K562 (cell line): ENCODE measurements at regions of chr12 and their contacts with region 1.

Region 1: GRCh38 chr12:6335451-6336078 is 6.3 kb downstream of the TNFRSF1A start:
- DNase-seq: peak; percentile 54 to 85 (median 65)
- ATAC-seq: peak; percentile 79
- H3K4me3 ChIP-seq: peak overlapping the region; percentile 39; the same call in 1 of the 2 replicates
- H3K27ac ChIP-seq: peak overlapping the region; percentile 98
- H3K4me1 ChIP-seq: peaks cover 27 to 48% of the 10 kb centered on the region in 2 experiments
- H3K27me3 ChIP-seq: no peaks in the 10 kb centered on the region
- CTCF ChIP-seq: peak; percentile 70 to 86 (median 74)
- EP300 ChIP-seq: no peak
- POLR2A ChIP-seq: no peak
- RAD21 ChIP-seq: peak; percentile 65 to 83

Region 2: DNA sequence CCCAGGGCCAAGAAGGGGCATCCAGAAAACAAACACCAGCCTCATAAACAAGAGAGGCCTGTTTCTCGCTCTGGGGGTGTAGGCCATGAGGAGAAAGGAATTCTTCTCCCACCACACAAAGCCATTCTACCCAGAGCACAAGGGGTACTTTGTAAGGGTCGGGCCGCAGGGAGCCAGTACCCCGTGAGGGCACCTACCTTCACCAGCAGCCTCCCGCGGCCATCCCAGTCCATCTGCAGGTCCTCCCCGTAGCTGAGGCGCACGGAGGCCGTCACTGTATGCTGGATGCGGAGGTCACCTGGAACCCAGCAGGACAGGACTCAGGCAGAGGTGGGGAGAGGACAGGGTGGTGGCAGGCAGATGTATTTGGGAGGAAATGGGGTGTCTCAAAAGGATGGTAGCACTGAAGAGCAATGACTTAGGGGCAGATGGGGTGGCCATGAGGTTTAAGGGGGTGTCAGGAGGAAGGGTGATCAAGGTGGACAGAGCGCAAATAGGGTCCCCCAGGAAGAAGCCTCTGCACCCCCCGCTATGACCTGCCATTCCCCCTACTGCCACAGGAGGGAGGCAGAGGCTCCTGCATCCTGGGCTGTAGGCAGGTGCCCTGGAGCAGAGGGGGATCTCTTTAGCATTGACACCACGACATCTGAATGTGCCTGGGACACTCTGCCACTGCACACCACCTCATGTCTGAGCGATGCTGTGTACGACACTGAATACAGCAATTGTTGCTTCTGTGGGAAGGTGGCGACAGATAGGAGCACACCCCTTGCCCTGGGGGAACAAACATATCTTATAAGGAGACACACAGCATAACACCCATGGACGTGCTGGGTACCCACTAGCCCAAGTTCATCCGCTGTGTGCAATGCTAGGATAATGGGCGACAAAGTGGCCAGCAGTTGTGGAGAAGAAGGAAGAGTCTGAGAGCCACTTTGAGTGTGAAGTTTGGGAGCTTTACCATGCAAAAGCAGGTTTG is 272.5 kb before region 1 on chr12:
- CTCF ChIA-PET with region 1: no interaction called
- POLR2A ChIA-PET with region 1: no interaction called
- in situ Hi-C with region 1: no loop called
- intact Hi-C with region 1: no loop called
- DNase-seq: peak; percentile 43 to 71 (median 71)
- ATAC-seq: peak; percentile 93
- H3K4me3 ChIP-seq: no peak overlapping the region
- H3K27ac ChIP-seq: no peak overlapping the region
- H3K4me1 ChIP-seq: no peaks in the 10 kb centered on the region
- H3K27me3 ChIP-seq: peaks cover 4 to 30% of the 10 kb centered on the region in 2 experiments; a peak in 3 of 5 replicates
- CTCF ChIP-seq: peak; percentile 79 to 85 (median 82)
- EP300 ChIP-seq: no peak
- POLR2A ChIP-seq: no peak
- RAD21 ChIP-seq: peak; percentile 69 to 88

Region 3: GRCh38 chr12:6323340-6323994 is 12.1 kb before region 1 on chr12:
- CTCF ChIA-PET with region 1: no interaction called
- POLR2A ChIA-PET with region 1: interaction called, 38 read pairs
- in situ Hi-C with region 1: no loop called
- intact Hi-C with region 1: no loop called
- DNase-seq: peak; percentile 63 to 77 (median 70)
- ATAC-seq: peak; percentile 84
- H3K4me3 ChIP-seq: no peak overlapping the region
- H3K27ac ChIP-seq: peak overlapping the region; percentile 69; the same call in 2 of the 3 replicates
- H3K4me1 ChIP-seq: peaks cover 16 to 21% of the 10 kb centered on the region in 2 experiments; a peak in 4 of 5 replicates
- H3K27me3 ChIP-seq: peaks cover 0 to 6% of the 10 kb centered on the region in 2 experiments; a peak in 4 of 5 replicates
- CTCF ChIP-seq: peak; percentile 67 to 93 (median 90)
- EP300 ChIP-seq: peak; percentile 40; the same call in 1 of the 2 replicates
- POLR2A ChIP-seq: no peak
- RAD21 ChIP-seq: peak; percentile 48 to 72

Region 4: DNA sequence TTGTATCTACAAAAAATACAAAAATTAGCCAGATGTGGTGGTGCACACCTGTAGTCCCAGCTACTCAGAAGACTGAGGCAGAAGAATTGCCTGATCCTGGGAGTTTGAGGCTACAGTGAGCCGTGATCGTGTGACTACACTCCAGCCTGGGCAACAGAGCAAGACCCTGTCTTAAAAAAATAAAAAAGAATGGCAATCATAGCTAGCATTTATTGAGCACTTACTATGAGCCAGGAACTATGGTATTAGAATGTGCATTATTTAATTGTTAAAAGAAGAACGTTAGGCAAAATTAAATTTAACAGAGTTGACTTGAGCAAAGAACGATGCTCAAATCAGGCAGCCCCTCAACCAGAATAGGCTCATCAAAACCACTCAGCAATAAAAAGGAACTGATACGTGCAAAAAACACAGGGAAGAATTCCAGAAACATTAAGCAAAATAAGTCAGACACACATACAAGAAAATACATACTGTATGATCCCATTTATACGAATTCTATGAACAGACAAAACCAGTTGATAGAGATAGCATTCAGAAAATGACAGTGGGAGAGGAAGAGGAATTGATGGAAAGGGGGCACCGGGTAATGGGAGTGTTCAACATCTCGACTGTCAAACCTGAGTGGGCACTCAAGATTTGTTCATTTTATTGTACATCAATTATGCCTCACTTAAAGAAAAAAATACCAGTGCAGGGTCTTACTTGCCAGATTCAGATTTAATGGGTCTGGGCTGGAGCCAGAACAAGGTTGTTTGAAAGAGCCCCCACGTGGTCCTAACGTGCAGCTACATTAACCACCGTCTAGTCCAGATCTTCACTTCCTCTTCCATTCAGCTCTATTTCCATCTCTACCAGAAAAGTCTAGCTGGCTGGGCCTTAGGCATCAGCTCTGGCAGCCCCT is 31.8 kb after region 1 on chr12:
- CTCF ChIA-PET with region 1: no interaction called
- POLR2A ChIA-PET with region 1: interaction called, 4 read pairs
- in situ Hi-C with region 1: loop called (anchors 5 kb)
- intact Hi-C with region 1: loop called (anchors 2 kb)
- DNase-seq: peak in 2 of 4 experiments; percentile 56 to 71
- ATAC-seq: peak; percentile 58
- H3K4me3 ChIP-seq: no peak overlapping the region
- H3K27ac ChIP-seq: peak overlapping the region; percentile 82
- H3K4me1 ChIP-seq: peaks cover 29 to 32% of the 10 kb centered on the region in 2 experiments; a peak in 4 of 5 replicates
- H3K27me3 ChIP-seq: no peaks in the 10 kb centered on the region
- CTCF ChIP-seq: peak; percentile 40 to 51 (median 41); a peak in 5 of 6 replicates
- EP300 ChIP-seq: no peak
- POLR2A ChIP-seq: no peak
- RAD21 ChIP-seq: peak in 1 of 2 experiments; percentile 61; a peak in 2 of 4 replicates

Region 5: DNA sequence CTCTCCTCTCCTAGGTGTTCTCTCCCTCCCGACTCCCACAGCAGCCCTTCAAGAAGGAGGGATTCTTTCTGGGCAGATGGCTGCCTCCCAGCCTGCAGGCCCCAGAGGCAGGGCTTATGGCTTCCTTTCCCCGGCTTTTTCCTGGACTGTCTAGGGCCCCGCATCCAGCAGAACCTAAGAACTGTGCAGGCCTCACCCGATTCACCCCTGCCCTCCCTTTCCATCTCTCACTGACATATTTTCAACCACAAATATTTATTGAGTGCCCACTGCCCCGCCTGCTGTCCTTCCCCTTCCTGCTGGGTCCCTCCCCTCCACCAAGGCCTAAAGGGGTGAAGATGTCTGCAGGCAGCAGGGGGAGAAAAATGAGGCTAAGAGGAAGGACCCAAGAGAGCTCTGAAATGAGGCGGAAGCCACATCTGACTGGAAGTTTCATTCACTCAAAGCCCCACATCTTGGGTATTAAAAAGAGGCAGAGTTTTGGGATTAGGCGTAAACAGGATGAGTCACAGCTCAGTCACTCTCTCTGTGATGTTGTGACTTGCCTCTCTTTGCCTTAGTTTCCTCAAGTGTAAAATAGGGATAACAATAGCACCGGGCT is 36.9 kb after region 1 on chr12:
- CTCF ChIA-PET with region 1: interaction called, 3 read pairs
- POLR2A ChIA-PET with region 1: interaction called, 3 read pairs
- in situ Hi-C with region 1: loop called (anchors 5 kb)
- intact Hi-C with region 1: loop called (anchors 2 kb)
- DNase-seq: no peak
- ATAC-seq: no peak
- H3K4me3 ChIP-seq: no peak overlapping the region
- H3K27ac ChIP-seq: peak overlapping the region; percentile 56; the same call in 1 of the 3 replicates
- H3K4me1 ChIP-seq: peaks cover 44 to 52% of the 10 kb centered on the region in 2 experiments; a peak in 4 of 5 replicates
- H3K27me3 ChIP-seq: no peaks in the 10 kb centered on the region
- CTCF ChIP-seq: no peak
- EP300 ChIP-seq: no peak
- POLR2A ChIP-seq: no peak
- RAD21 ChIP-seq: no peak